ENCODE measurements at regions of chr17 and their contacts with region 1.

Region 1: DNA sequence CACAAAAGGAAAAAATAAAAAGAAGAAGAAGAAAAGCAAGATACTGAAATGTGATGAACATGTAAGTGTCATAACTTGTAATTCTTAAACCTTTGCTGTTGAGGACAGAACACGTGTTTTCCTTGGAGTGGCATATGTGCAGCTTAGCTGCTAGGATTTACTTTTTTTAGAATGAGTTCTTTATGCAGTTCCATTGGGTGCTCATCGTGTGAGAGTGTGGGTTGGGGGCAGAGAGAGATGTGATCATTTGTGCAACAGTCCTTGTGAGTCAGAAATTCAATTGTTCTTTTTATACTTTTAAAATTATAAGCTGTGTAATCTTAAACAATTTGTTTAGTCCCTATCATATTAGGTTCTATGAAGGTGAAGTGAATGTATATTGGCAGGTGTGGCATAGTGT is 5.5 kb upstream of the DHRS11 start:
- DNase-seq: peak in 1 of 10 donors; percentile 35

Region 2: DNA sequence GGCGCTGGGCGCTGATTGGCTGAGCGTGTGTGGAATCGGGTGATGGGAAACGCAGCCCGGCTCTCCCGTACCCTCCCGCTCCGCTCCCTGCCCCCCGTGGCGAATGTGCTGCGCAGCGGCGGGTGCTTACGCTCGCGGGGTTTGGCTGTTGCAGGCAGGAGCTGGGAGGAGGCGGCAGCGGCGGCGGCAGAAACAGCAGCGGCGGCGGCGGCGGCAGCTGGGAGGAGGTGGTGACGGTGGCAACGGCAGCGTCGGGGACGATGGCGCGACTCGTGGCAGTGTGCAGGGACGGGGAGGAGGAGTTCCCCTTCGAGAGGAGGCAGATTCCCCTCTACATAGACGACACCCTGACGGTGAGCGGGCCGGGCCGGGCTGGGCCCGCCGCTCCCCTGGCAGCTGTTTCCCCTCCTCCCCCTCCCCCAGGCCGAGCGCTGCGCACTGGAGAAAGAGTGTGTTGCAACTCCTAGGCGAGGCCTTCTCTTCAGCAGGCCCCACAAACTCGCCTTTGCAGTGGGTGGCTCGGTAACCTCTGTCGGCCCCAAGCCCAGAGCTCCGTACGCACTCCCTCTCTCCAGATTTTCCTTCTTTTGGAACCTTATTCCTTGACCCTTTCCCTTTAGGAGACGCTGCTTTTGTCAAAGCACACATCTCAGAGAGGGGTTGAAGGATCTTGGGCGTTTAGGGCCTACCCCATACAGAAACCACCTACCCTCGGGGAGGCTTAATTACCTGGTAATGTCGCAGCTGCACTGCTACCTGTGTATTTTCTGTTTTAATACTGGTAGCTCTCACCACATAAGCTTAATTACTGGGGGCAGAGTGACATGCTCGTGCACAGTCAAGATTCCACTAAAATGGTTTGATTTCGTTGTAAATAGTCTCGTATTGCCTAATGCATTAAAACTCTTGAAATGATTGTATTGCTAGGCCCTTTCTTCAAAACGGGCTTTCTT is 40.4 kb before region 1 on chr17:
- intact Hi-C with region 1: loop called (anchors 5 kb)
- DNase-seq: peak in 9 of 10 donors; percentile 95 to 100 (median 96)

Measured in posterior cingulate gyrus (tissue), 11 donors.